ENCODE measurements at regions of chr2 and their contacts with region 1.

Region 1: GRCh38 chr2:71643685-71644360 is 190.5 kb downstream of the DYSF start:
- DNase-seq: no peak
- H3K4me3 ChIP-seq: no peak overlapping the region
- H3K27ac ChIP-seq: peak overlapping the region in 1 of 59 donors; percentile 16
- H3K27me3 ChIP-seq: no peaks in the 10 kb centered on the region
- CTCF ChIP-seq: no peak

Region 2: DNA sequence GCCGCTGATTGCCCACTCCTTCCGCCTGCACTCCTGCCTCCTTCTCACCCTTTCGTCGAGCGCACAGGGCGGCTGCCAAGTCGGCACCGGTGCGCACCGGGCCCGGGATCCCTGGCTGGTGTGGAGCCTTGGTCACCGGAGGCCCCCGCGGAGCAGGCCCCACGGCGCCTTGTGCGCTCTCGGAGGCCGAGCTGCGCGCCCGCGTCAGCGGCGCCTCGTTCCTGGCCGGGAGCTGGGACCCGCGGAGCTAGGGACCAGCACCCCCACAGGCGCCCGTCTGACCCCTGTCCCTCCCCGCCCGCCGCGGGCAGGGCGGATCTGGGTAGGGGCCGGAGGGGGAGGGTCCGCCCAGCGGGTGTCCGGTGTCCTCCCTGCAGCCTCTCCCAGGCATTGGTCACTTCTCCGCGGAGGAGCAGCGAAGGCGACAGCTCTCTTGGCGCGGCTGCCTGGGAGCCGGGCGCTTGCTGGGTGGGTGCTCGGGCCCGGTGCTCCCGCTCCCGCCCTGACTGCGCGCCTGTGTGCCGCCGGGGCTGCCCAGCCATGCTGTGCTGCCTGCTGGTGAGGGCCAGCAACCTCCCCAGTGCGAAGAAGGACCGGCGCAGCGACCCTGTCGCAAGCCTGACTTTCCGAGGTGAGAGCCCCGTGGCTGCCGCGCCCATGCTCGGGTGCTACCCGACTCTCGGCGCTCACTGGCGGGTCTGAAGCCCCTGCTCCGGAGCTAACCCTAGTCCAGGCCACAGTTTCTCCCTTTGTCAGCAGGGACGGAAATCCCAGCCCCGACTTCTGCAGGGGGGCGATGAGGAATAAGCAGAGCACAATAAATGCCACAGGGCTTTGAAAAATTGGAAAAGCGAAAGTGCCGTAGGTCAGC is 177.3 kb before region 1 on chr2:
- intact Hi-C with region 1: no loop called
- DNase-seq: peak in 3 of 10 donors; percentile 22 to 53 (median 48)
- H3K4me3 ChIP-seq: peak overlapping the region; percentile 51 to 87 (median 68)
- H3K27ac ChIP-seq: peak overlapping the region in 8 of 59 donors; percentile 12 to 52 (median 30)
- H3K27me3 ChIP-seq: peaks cover 0 to 20% (median 0%) of the 10 kb centered on the region in 45 donors
- CTCF ChIP-seq: peak in 1 of 56 donors; percentile 11

Region 3: GRCh38 chr2:71603311-71603811 is 40.5 kb before region 1 on chr2:
- intact Hi-C with region 1: no loop called
- DNase-seq: peak in 7 of 10 donors; percentile 2 to 44 (median 24)
- H3K4me3 ChIP-seq: no peak overlapping the region
- H3K27ac ChIP-seq: peak overlapping the region in 32 of 59 donors; percentile 2 to 96 (median 50)
- H3K27me3 ChIP-seq: no peaks in the 10 kb centered on the region
- CTCF ChIP-seq: no peak

Region 4: DNA sequence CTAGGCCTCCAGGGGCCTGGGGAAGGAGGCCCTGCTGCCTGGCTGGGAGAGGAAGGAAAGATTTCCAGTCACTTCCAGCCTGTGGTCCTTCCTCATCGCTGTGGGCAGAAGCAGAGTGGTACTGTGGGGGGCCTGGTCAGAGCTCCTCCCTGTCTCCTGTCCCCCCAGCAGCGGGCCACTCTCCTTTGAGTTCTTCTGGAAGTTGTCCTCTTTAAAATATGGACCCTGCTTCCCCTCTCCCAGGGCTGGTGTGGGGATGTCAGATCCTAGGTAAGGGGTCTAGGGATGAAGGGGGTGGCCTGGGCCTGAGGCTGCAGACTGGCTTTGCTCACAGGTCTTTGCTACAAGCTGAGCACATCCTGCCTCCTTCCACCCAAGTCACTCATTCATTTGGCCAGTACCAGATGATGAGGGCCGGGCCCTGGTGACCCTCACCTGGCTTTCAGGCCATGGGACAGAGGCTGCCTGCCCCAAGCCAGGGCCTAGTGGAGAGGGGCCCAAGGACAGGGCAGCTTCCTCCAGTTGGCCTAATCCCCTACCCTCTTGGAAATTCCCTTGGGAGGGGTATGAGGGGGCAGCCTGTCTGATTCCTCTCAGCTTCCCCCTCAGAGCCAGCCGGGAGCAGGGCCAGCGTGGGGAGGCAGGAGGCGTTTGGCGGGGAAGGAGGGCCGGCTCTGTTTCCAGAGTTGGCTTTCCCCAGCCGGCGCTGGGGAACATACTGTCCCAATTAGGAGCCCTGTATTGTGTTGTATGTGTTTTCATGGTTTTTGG is 41.4 kb after region 1 on chr2:
- intact Hi-C with region 1: loop called in 1 of 2 experiments (anchors 5 kb)
- DNase-seq: peak in 8 of 10 donors; percentile 16 to 74 (median 66)
- H3K4me3 ChIP-seq: no peak overlapping the region
- H3K27ac ChIP-seq: peak overlapping the region in 53 of 59 donors; percentile 6 to 88 (median 72)
- H3K27me3 ChIP-seq: no peaks in the 10 kb centered on the region
- CTCF ChIP-seq: no peak